ENCODE measurements at regions of chr10 and their contacts with region 1.

Region 1: DNA sequence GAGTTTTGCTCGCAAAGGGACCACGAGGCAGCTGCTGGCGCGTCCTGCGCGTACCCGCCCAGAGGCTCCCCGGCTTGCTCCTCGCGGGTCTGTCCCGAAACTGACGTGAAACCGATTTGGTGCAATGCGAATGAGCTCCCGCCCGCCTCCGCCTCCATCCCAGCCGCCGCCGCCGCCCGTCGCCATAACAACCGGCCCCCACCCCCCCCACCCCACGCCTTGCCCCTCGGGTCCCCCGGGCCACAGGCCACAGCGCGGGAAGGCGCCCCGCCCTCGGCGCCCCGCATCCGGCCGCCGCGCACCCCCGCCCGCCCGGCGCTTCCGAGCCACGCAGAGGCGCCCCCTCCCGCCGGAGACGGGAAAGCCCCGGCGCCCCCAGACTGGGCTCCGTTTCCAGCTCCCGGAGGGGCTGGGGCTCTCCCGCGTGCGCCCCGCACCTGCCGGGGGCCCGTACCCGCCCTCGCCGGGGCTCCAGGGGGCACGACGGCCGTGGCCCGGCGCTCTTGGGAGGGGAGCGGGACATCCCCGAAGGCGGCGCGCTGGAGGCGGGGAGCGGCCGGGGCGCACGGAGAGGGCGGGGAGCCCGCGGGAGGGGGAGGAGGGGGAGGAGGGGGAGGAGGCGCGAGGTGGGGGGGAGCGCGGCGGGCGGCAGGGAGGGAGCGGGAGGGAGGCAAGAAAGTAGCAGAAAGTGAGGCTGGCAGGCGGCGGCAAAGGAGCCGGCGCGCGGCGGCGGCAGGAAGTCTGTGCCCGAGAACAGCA is at the start of gene CAMK1D:
- DNase-seq: peak; percentile 91 to 94 (median 92)
- H3K4me3 ChIP-seq: peak within 1 kb of the TSS; percentile 40 to 72
- H3K4me3 Mint-ChIP-seq: peak within 1 kb of the TSS; percentile 93 to 100 (median 97)
- H3K27ac ChIP-seq: peak within 1 kb of the TSS; percentile 71
- H3K27ac Mint-ChIP-seq: peak within 1 kb of the TSS; percentile 98 to 99 (median 98)
- H3K4me1 ChIP-seq: peaks cover 25% of the 10 kb centered on the region
- H3K4me1 Mint-ChIP-seq: peaks cover 31 to 54% (median 41%) of the 10 kb centered on the region in 4 donors
- H3K27me3 ChIP-seq: no peaks in the 10 kb centered on the region
- H3K27me3 Mint-ChIP-seq: peaks cover 0 to 6% of the 10 kb centered on the region in 2 donors
- total RNA-seq, gene CAMK1D: 21.9 to 22.2 TPM

Region 2: GRCh38 chr10:12042797-12043651 is 306.0 kb before region 1 on chr10 and contains the start of gene UPF2:
- CTCF ChIA-PET with region 1: no interaction called
- POLR2A ChIA-PET with region 1: interaction called, 8 read pairs
- intact Hi-C with region 1: loop called (anchors 1 kb)
- DNase-seq: peak; percentile 97 to 98 (median 98)
- H3K4me3 ChIP-seq: peak within 1 kb of the TSS; percentile 81 to 88
- H3K4me3 Mint-ChIP-seq: peak within 1 kb of the TSS; percentile 93 to 99 (median 97)
- H3K27ac ChIP-seq: peak within 1 kb of the TSS; percentile 94
- H3K27ac Mint-ChIP-seq: peak within 1 kb of the TSS; percentile 98 to 100 (median 100)
- H3K4me1 ChIP-seq: peaks cover 32% of the 10 kb centered on the region
- H3K4me1 Mint-ChIP-seq: peaks cover 19 to 51% (median 36%) of the 10 kb centered on the region in 4 donors
- H3K27me3 ChIP-seq: no peaks in the 10 kb centered on the region
- H3K27me3 Mint-ChIP-seq: peaks cover 1 to 2% of the 10 kb centered on the region in 2 donors
- total RNA-seq, gene UPF2: 35.2 to 38.6 TPM

Region 3: DNA sequence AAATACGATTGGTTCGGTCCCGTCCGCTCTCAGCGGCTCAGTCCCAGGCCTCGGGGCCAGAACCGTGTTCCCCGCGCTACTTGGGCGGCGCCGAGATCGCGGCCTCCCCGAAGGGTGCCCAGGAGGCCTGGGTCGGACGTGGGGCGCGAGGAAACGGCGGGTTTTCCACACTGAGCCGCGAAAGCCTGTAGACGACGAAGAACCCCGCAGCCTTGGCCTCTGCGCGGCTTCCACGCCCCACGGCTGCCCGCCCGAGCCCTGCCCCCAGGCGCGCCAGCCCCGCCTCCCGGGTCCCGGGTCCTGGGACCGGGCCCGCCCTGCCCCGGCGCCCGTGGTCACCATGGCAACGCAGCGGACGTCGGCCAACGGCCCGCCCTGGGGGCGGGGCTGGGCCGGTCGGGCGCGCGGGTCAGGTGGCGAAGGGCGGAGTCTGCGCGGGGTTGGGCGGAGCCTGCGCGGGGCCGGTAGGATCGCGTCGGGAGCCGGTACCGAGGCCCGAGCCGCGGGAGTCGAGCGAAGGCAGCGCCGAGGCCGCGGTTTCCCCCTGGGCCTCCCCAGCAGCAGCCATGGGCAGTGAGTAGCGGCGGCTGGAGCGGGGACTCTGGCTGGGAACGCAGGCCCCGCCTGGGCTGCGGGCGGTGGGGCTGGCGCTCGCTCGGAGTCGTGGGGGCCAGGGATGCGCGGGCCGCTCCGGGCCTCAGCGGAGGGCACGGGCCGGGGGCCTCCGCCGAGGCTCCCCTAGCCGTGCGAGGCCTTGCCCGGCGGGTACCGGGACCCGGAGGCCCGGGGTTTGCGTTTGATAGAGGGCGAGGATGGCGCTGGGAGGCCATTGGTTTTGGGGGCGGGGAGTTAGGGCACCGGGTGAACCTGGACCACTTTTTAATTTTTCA is 219.6 kb before region 1 on chr10 and contains the start of gene SEC61A2:
- CTCF ChIA-PET with region 1: no interaction called
- POLR2A ChIA-PET with region 1: no interaction called
- intact Hi-C with region 1: loop called (anchors 5 kb)
- DNase-seq: peak; percentile 93 to 99 (median 97)
- H3K4me3 ChIP-seq: peak within 1 kb of the TSS; percentile 55 to 79
- H3K4me3 Mint-ChIP-seq: peak within 1 kb of the TSS; percentile 88 to 93 (median 91)
- H3K27ac ChIP-seq: peak within 1 kb of the TSS; percentile 72
- H3K27ac Mint-ChIP-seq: peak within 1 kb of the TSS; percentile 78 to 96 (median 93)
- H3K4me1 ChIP-seq: peaks cover 20% of the 10 kb centered on the region
- H3K4me1 Mint-ChIP-seq: peaks cover 11 to 33% (median 22%) of the 10 kb centered on the region in 4 donors
- H3K27me3 ChIP-seq: no peaks in the 10 kb centered on the region
- H3K27me3 Mint-ChIP-seq: no peaks in the 10 kb centered on the region
- total RNA-seq, gene SEC61A2: 12.2 to 13.4 TPM

Region 4: GRCh38 chr10:12264204-12264940 is 84.7 kb before region 1 on chr10:
- CTCF ChIA-PET with region 1: interaction called, 8 read pairs
- POLR2A ChIA-PET with region 1: interaction called, 3 read pairs
- intact Hi-C with region 1: loop called (anchors 2 kb)
- DNase-seq: peak; percentile 59 to 73 (median 63)
- H3K4me3 ChIP-seq: peak overlapping the region in 1 of 2 donors; percentile 27
- H3K4me3 Mint-ChIP-seq: peak overlapping the region; percentile 41 to 84 (median 77)
- H3K27ac ChIP-seq: no peak overlapping the region
- H3K27ac Mint-ChIP-seq: peak overlapping the region in 5 of 7 donors; percentile 2 to 82 (median 78)
- H3K4me1 ChIP-seq: peaks cover 4% of the 10 kb centered on the region
- H3K4me1 Mint-ChIP-seq: peaks cover 7 to 18% (median 13%) of the 10 kb centered on the region in 4 donors
- H3K27me3 ChIP-seq: no peaks in the 10 kb centered on the region
- H3K27me3 Mint-ChIP-seq: no peaks in the 10 kb centered on the region

Region 5: DNA sequence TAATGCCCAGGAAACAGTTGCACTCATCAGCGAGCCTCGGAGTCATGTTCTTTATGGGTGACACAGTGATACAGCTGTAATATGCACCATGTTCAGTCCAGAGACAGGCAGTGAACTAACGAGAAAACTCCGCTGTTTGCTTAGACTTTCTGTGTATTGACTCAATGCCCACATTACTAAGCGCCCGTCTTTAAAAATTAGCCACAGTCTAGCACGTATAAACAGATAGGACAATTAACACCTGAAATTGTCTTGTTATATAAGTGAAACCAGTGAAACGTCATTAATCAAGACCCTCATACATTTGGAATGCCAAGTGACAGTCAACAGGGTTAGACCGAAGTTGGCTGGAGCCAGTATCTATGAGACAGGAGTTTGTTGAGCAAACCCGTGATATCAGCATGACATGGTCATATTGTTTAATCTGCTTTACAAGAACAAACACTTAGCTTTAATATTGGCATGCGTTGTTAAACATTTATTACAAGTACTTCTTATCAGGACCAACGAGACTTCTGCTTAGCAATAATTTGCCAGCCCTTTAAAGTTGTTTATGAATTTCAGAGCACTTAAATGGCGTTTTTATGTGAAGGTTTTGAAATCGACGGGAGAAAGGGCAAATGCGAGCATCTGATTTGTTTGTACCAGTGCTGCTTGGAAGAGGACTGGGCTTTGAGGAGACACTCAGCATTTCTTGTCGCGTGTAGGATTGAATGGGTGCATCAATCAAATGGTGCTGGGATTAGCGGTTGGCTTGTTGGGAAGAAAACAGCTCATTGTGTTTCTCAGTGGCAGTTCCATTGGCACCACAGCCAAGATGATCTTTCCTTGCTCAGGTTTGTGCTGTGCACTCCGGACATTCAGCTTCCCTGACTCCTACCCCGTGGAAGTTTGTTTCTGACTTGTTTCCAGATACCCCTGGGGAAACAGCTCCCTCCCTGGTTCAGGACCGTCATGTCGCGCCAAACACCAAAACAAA is 56.6 kb after region 1 on chr10:
- CTCF ChIA-PET with region 1: interaction called, 3 read pairs
- POLR2A ChIA-PET with region 1: no interaction called
- intact Hi-C with region 1: loop called (anchors 10 kb)
- DNase-seq: no peak
- H3K4me3 ChIP-seq: no peak overlapping the region
- H3K4me3 Mint-ChIP-seq: no peak overlapping the region
- H3K27ac ChIP-seq: no peak overlapping the region
- H3K27ac Mint-ChIP-seq: peak overlapping the region in 2 of 7 donors; percentile 36 to 54
- H3K4me1 ChIP-seq: no peaks in the 10 kb centered on the region
- H3K4me1 Mint-ChIP-seq: peaks cover 9 to 43% (median 19%) of the 10 kb centered on the region in 4 donors
- H3K27me3 ChIP-seq: no peaks in the 10 kb centered on the region
- H3K27me3 Mint-ChIP-seq: no peaks in the 10 kb centered on the region

Region 6: GRCh38 chr10:12656518-12657142 is 307.6 kb after region 1 on chr10:
- CTCF ChIA-PET with region 1: interaction called, 36 read pairs
- POLR2A ChIA-PET with region 1: interaction called, 19 read pairs
- intact Hi-C with region 1: loop called (anchors 1 kb)
- DNase-seq: peak in 4 of 5 donors; percentile 56 to 64 (median 60)
- H3K4me3 ChIP-seq: no peak overlapping the region
- H3K4me3 Mint-ChIP-seq: no peak overlapping the region
- H3K27ac ChIP-seq: no peak overlapping the region
- H3K27ac Mint-ChIP-seq: no peak overlapping the region
- H3K4me1 ChIP-seq: no peaks in the 10 kb centered on the region
- H3K4me1 Mint-ChIP-seq: peaks cover 2 to 15% (median 7%) of the 10 kb centered on the region in 4 donors
- H3K27me3 ChIP-seq: no peaks in the 10 kb centered on the region
- H3K27me3 Mint-ChIP-seq: no peaks in the 10 kb centered on the region

Measured in CD4-positive, alpha-beta memory T cell (primary cell).